Activated B cell treated with CpG ODN at 0.5 μM for 24 hours (primary cell): ENCODE measurements at regions of chrX and their contacts with region 1.

Region 1: DNA sequence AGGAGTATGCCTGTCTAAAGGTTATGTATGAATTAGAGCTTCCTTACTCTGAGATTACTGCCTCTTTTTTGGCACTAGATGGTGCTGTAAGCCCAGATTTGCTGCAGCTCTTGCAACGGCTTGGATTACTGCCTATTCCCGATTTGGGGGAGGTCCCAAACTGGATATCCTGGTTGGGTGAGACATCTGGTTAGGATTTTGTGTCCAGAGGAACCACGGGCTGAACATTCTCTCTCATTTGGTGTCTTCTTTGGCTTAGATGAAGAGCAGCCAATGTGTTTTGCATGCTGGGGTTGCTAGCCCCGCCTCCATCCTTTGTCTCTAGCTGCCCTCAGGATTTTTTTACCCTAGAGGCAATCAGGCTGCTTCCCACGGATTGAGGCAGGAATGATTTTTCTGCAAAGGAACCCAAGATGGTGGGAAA is 31.9 kb downstream of the F8A1 start:
- DNase-seq: peak; percentile 14
- ATAC-seq: peak; percentile 31
- H3K4me3 Mint-ChIP-seq: peak overlapping the region; percentile 59
- H3K27ac Mint-ChIP-seq: no peak overlapping the region
- H3K4me1 Mint-ChIP-seq: peaks cover 2% of the 10 kb centered on the region
- H3K27me3 Mint-ChIP-seq: peaks cover 2% of the 10 kb centered on the region
- CTCF ChIP-seq: no peak

Region 2: DNA sequence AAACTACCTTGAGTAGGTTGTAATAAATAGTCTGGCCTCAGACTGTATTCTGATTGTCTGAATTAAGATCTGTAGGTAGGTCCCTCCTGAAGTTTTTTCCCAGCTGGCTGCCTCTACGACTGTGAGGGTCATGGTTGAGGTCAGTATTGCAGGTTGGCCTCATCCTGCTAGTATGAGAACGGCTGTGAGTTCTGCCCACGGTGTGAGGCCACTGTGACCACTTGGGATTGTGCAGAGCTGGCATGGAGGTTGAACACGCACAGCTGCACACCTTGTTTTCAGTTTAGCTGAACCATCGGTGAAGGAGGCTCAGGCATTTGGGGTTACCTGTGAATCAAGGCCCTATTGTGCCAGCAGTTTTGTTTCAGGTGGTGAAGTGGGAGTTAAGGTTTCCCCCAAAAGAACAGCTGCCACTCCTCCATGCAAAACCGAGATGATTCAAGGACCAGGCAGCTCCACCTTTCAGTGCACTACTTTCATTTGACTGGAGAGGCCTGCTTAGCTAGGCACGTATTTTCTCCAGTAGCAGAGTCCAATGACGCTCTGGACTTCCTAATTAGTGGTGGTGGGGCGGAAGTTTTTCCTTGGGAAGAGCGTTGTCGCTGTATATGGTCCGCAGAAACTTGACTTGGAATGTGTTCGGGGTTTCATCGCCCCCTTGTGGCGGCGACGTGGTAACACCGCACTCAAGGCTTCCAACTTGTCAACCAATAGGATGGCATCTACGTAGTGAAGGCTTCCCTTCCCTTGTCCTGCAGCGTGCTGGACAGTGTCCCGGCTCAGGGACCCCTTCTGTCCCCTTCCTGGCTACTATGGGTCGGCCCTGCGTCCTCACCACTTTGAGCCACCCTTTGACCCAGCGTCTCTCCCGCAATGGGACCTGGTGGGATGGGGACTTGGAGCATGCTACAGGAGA is 139.1 kb after region 1 on chrX:
- CTCF ChIA-PET with region 1: interaction called, 6 read pairs
- POLR2A ChIA-PET with region 1: no interaction called
- intact Hi-C with region 1: loop called (anchors 10 kb)
- DNase-seq: peak; percentile 26
- ATAC-seq: peak; percentile 84
- H3K4me3 Mint-ChIP-seq: peak overlapping the region; percentile 48
- H3K27ac Mint-ChIP-seq: peak overlapping the region; percentile 35
- H3K4me1 Mint-ChIP-seq: peaks cover 13% of the 10 kb centered on the region
- H3K27me3 Mint-ChIP-seq: no peaks in the 10 kb centered on the region
- CTCF ChIP-seq: no peak

Region 3: DNA sequence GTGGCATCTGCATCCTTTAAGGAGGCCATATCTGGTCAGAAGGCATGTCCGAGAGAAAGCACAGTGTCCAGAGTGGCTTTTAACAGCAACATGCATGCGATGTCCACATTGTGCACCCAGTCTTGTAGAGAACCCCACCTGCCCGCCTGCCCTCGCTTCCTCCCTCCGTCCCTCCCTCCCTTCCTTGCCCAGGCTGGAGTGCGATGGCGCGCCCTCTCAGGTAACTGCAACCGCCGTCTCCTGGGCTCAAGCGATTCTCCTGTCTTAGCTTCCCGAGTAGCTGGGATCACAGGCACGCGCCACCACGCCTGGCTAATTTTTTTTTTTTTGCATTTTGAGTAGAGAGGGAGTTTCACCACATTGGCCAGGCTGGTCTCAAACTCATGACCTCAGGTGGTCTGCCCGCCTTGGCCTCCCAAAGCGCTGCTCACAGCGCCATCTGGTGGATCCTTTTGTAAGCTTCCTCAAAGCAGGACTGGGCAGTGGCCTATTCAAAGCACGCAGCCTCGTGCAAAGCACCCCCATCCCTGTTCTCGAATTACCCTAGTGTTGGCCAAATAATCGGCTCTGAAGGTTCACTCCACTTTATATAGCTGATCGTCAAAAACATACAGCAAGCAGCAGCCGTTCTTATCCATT is 168.2 kb after region 1 on chrX:
- CTCF ChIA-PET with region 1: interaction called, 9 read pairs
- POLR2A ChIA-PET with region 1: no interaction called
- intact Hi-C with region 1: loop called (anchors 1 kb)
- DNase-seq: no peak
- ATAC-seq: peak; percentile 61
- H3K4me3 Mint-ChIP-seq: no peak overlapping the region
- H3K27ac Mint-ChIP-seq: no peak overlapping the region
- H3K4me1 Mint-ChIP-seq: no peaks in the 10 kb centered on the region
- H3K27me3 Mint-ChIP-seq: no peaks in the 10 kb centered on the region
- CTCF ChIP-seq: no peak

Region 4: DNA sequence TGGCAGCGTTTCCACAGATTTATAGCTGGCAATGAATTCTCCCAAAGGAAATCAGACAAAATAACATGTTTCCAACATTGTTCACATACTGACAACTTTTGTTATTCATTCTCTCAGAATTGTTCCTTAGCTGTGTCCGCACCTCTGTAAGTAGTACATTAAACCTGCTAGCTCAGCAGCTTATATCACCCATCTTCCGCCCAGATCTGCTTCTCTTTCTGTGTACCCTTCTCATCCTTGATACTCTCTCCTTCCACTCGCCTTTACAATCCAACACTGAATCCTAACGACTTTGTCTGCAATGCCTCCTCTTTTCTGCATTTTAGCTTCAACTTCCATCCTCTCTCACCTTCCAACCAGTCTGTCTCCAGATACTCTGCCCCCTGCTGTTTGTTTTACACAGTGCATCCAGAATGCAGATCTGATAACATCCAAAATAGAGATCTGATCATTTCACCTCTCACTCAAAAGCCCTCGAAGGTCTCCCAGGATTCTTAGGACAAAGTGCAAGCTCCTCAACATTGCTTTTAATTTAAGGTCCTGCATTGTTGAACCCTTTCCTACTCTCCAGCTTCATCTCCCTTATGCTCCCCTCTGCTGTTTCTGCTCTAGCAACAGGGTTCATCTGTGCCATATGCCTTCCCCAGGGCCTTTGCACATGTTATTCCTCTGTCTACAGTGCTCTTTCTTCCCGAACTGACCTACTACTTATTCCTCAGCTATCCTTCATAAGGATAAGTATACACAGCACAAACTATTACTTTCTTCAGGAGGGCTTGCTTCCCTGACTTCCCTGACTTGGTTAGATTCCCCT is 230.9 kb after region 1 on chrX:
- CTCF ChIA-PET with region 1: interaction called, 3 read pairs
- POLR2A ChIA-PET with region 1: no interaction called
- intact Hi-C with region 1: loop called (anchors 2 kb)
- DNase-seq: no peak
- ATAC-seq: no peak
- H3K4me3 Mint-ChIP-seq: no peak overlapping the region
- H3K27ac Mint-ChIP-seq: no peak overlapping the region
- H3K4me1 Mint-ChIP-seq: no peaks in the 10 kb centered on the region
- H3K27me3 Mint-ChIP-seq: peaks cover 2% of the 10 kb centered on the region
- CTCF ChIP-seq: no peak

Region 5: GRCh38 chrX:155216179-155216939 is 298.3 kb after region 1 on chrX and contains the start of gene VBP1:
- CTCF ChIA-PET with region 1: interaction called, 3 read pairs
- POLR2A ChIA-PET with region 1: no interaction called
- intact Hi-C with region 1: loop called (anchors 5 kb)
- DNase-seq: peak; percentile 66
- ATAC-seq: peak; percentile 98
- H3K4me3 Mint-ChIP-seq: peak within 1 kb of the TSS; percentile 90
- H3K27ac Mint-ChIP-seq: peak within 1 kb of the TSS; percentile 91
- H3K4me1 Mint-ChIP-seq: peaks cover 18% of the 10 kb centered on the region
- H3K27me3 Mint-ChIP-seq: no peaks in the 10 kb centered on the region
- CTCF ChIP-seq: no peak
- total RNA-seq, gene VBP1: 40.6 and 43.9 TPM in 2 replicates

Region 6: GRCh38 chrX:155819966-155820491 is 902.0 kb after region 1 on chrX:
- CTCF ChIA-PET with region 1: no interaction called
- POLR2A ChIA-PET with region 1: no interaction called
- intact Hi-C with region 1: loop called (anchors 5 kb)
- DNase-seq: no peak
- ATAC-seq: peak; percentile 34
- H3K4me3 Mint-ChIP-seq: no peak overlapping the region
- H3K27ac Mint-ChIP-seq: no peak overlapping the region
- H3K4me1 Mint-ChIP-seq: no peaks in the 10 kb centered on the region
- H3K27me3 Mint-ChIP-seq: peaks cover 4% of the 10 kb centered on the region
- CTCF ChIP-seq: no peak